T-cell (primary cell): ENCODE measurements at regions of chr17 and their contacts with region 1.

Region 1: DNA sequence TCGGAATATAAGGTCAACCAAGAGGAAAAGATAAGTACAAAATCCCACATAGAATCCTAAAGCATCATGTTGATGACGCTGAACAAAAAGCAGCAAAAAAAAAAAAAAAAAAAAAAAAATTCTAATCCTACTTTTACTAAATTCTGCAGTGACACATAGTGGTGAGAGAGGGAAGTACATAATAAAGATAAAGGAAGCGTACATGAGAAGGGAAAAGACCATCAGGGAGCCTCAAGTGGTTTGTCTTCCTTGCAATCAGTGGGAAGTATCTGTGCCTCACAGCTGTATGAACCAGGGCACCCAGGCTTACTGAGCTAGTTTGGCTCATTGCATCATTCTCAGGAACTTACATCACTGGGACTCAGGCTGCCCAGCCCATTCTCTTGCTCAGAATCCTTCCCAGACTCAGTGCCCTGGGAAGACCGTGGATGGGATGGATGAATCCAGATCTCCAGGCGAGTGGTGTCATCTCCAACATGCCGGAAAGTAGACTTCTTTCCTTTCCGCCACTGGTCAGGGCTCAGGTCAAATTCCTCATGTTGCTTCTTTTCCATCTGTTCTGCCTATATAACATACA is 21.2 kb downstream of the SMG6 start:
- DNase-seq: peak in 1 of 35 experiments; percentile 80
- ATAC-seq: peak in 2 of 4 experiments; percentile 48 to 54
- H3K4me3 ChIP-seq: no peak overlapping the region
- H3K4me3 Mint-ChIP-seq: no peak overlapping the region
- H3K27ac ChIP-seq: no peak overlapping the region
- H3K27ac Mint-ChIP-seq: peak overlapping the region; percentile 34 to 44
- H3K4me1 ChIP-seq: peaks cover 12 to 14% of the 10 kb centered on the region in 2 experiments
- H3K4me1 Mint-ChIP-seq: peaks cover 26 to 32% (median 30%) of the 10 kb centered on the region in 3 donors
- H3K27me3 ChIP-seq: no peaks in the 10 kb centered on the region
- H3K27me3 Mint-ChIP-seq: no peaks in the 10 kb centered on the region

Region 2: DNA sequence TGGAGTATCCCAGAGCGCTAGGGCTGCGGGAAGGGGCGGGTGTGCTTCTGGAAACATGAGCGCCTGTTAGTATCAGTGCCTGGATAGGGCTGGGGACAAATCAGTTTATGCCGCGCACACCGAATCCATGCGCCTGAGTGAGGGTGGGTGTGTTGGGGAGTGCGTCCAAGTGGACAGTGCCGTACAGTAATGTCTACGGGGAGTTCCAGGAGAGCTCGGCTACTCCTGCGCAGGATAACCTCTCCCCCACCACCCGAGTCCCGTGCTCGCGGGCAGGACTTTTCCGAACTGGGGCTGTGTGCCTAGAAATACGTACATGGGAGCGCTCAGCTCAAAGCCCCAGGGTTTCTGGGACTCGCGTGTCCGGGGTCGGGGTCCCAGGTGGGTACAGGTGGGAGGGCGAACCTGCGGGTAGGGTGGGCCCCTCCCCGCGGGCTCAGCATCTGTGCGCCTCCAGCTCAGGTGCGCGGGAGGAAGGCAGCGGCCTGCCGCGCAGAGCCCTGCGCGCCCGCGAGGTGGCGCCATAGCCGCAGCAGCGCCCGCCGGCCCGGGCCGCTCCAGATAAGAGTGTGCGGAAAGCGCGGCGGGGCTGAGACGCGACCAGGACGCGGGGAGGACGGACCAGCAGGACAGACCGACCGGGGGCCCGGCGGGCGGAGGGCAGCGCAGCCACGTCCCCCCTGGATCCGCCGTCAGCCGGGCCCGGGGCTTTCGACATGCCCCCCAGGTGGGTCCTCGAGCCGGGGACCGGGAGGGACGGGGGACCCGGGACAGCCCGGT is 227.7 kb before region 1 on chr17 and contains the start of gene HIC1:
- CTCF ChIA-PET with region 1: interaction called in 1 of 2 experiments, 32 read pairs
- POLR2A ChIA-PET with region 1: no interaction called
- DNase-seq: peak; percentile 51 to 88 (median 73)
- ATAC-seq: peak; percentile 56 to 60 (median 58)
- H3K4me3 ChIP-seq: peak within 1 kb of the TSS; percentile 47 to 58
- H3K4me3 Mint-ChIP-seq: peak within 1 kb of the TSS; percentile 76 to 79 (median 76)
- H3K27ac ChIP-seq: peak within 1 kb of the TSS; percentile 76
- H3K27ac Mint-ChIP-seq: peak within 1 kb of the TSS; percentile 65 to 69
- H3K4me1 ChIP-seq: peaks cover 14 to 66% of the 10 kb centered on the region in 2 experiments
- H3K4me1 Mint-ChIP-seq: peaks cover 20 to 27% (median 24%) of the 10 kb centered on the region in 3 donors
- H3K27me3 ChIP-seq: peaks cover 2 to 39% of the 10 kb centered on the region in 2 experiments
- H3K27me3 Mint-ChIP-seq: peaks cover 4 to 5% of the 10 kb centered on the region in 2 donors
- total RNA-seq, gene HIC1: 3.2 to 12.3 (median 8.4) TPM

Region 3: GRCh38 chr17:2244545-2245525 is 37.5 kb before region 1 on chr17:
- CTCF ChIA-PET with region 1: interaction called, 7 to 14 read pairs
- POLR2A ChIA-PET with region 1: interaction called in 1 of 2 experiments, 3 read pairs
- DNase-seq: peak; percentile 59 to 90 (median 80)
- ATAC-seq: peak; percentile 86 to 98 (median 92)
- H3K4me3 ChIP-seq: no peak overlapping the region
- H3K4me3 Mint-ChIP-seq: no peak overlapping the region
- H3K27ac ChIP-seq: no peak overlapping the region
- H3K27ac Mint-ChIP-seq: peak overlapping the region; percentile 56 to 78
- H3K4me1 ChIP-seq: peaks cover 2 to 5% of the 10 kb centered on the region in 2 experiments
- H3K4me1 Mint-ChIP-seq: peaks cover 33 to 39% (median 34%) of the 10 kb centered on the region in 3 donors
- H3K27me3 ChIP-seq: no peaks in the 10 kb centered on the region
- H3K27me3 Mint-ChIP-seq: no peaks in the 10 kb centered on the region

Region 4: DNA sequence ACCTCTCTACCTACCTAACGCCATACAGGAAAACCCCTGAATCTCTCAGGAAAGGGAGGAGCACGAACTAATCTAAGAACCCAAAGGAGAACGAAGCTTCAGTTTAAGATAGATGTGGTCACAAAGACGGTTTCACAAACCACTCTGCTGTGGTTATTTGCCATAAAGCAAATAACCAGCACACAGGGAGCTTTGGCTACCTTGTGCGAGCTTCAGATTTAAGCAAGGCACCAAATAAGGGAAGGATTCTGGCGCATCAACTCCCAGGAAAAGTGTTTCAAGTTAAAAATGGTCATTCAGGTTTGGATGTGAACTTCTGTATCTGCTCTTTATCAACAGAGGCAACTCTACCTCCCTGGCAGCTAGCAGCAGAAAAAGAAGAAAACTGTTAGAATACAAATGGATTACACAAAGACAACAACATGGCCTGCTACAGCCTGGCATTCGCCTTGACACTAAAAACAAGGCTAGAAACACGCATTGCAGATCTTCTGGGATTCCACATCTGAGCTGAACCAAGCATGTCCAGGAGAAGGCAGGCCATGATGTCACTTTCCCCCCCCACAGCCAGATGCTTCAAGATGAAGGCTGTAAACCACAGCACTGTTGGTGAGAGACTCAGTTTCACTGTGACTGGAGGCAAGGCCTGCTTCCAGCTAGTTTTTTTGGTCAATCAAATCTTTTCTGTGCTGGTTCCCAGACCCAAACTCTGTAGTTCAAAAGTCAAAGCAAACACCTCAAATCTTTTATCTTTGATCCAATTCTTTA is 22.4 kb before region 1 on chr17:
- CTCF ChIA-PET with region 1: interaction called in 1 of 2 experiments, 10 read pairs
- POLR2A ChIA-PET with region 1: no interaction called
- DNase-seq: peak in 34 of 35 experiments; percentile 8 to 83 (median 46)
- ATAC-seq: peak; percentile 58 to 82 (median 65)
- H3K4me3 ChIP-seq: peak overlapping the region in 1 of 2 donors; percentile 11
- H3K4me3 Mint-ChIP-seq: peak overlapping the region; percentile 58 to 72 (median 63)
- H3K27ac ChIP-seq: peak overlapping the region; percentile 92
- H3K27ac Mint-ChIP-seq: peak overlapping the region; percentile 93 to 97
- H3K4me1 ChIP-seq: peaks cover 51 to 70% of the 10 kb centered on the region in 2 experiments
- H3K4me1 Mint-ChIP-seq: peaks cover 68 to 73% (median 70%) of the 10 kb centered on the region in 3 donors
- H3K27me3 ChIP-seq: no peaks in the 10 kb centered on the region
- H3K27me3 Mint-ChIP-seq: no peaks in the 10 kb centered on the region